ENCODE measurements at regions of chr12 and their contacts with region 1.

Region 1: GRCh38 chr12:117119592-117120198 is 20.5 kb upstream of the TESC start:
- DNase-seq: peak; percentile 42
- H3K4me3 Mint-ChIP-seq: no peak overlapping the region
- H3K27ac Mint-ChIP-seq: no peak overlapping the region
- H3K4me1 Mint-ChIP-seq: no peaks in the 10 kb centered on the region
- H3K27me3 Mint-ChIP-seq: peaks cover 6% of the 10 kb centered on the region

Region 2: GRCh38 chr12:116703214-116703795 is 416.4 kb before region 1 on chr12:
- CTCF ChIA-PET with region 1: interaction called, 12 read pairs
- DNase-seq: peak; percentile 76
- H3K4me3 Mint-ChIP-seq: no peak overlapping the region
- H3K27ac Mint-ChIP-seq: no peak overlapping the region
- H3K4me1 Mint-ChIP-seq: no peaks in the 10 kb centered on the region
- H3K27me3 Mint-ChIP-seq: peaks cover 12% of the 10 kb centered on the region

Region 3: DNA sequence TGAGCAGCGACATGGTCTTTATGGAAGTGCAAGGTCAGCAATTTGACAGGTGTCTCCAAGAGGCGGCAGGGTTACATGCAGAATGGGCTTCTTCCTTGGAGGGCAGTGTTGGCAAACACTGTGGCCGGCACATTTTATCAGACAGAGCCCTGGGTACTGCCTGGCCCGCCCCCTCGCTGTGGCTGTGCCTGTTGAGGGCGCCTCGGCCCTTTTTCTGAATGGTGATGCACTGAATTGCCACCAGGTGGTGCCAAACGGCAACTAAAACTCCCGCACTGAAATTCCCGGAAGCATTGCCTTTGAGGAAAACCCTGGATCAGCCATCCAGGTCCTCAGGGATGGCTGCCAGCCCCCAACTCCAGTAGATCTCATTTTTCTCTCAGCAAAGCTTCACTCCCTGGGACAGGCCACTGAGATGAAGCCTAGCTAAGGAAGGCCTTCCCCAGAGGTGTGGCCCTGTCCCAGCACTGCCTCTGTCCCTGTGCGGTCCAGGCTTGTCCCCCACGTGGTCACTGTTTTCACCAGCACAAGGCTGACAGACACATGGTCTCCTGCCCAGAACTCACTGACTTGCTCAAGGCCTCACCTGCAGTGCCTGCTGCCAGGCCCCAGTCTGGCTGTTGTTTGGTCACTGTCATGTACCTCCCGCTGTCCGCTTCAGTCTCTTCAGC is 94.1 kb before region 1 on chr12:
- CTCF ChIA-PET with region 1: interaction called, 103 read pairs
- DNase-seq: peak; percentile 60
- H3K4me3 Mint-ChIP-seq: no peak overlapping the region
- H3K27ac Mint-ChIP-seq: no peak overlapping the region
- H3K4me1 Mint-ChIP-seq: peaks cover 2% of the 10 kb centered on the region
- H3K27me3 Mint-ChIP-seq: no peaks in the 10 kb centered on the region

Region 4: GRCh38 chr12:117105902-117106301 is 13.8 kb before region 1 on chr12:
- CTCF ChIA-PET with region 1: interaction called, 13 read pairs
- DNase-seq: peak; percentile 44
- H3K4me3 Mint-ChIP-seq: no peak overlapping the region
- H3K27ac Mint-ChIP-seq: no peak overlapping the region
- H3K4me1 Mint-ChIP-seq: peaks cover 11% of the 10 kb centered on the region
- H3K27me3 Mint-ChIP-seq: peaks cover 67% of the 10 kb centered on the region

Measured in activated naive CD4-positive, alpha-beta T cell treated with anti-CD3 and anti-CD28 coated beads, Interleukin-2, amount 10 ng/mL, durations not matched to agents 7 days and 5 days (primary cell).